Activated T-helper 2 cell treated with anti-CD3 and anti-CD28 coated beads, Interferon-gamma antibody, Interleukin-2, Interleukin-4, amounts not matched to agents 10 μg/mL and 5 μg/mL and 100 μg/mL, durations not matched to agents 14 hours and 24 hours and 36 hours (primary cell): ENCODE measurements at regions of chr5 and their contacts with region 1.

Region 1: DNA sequence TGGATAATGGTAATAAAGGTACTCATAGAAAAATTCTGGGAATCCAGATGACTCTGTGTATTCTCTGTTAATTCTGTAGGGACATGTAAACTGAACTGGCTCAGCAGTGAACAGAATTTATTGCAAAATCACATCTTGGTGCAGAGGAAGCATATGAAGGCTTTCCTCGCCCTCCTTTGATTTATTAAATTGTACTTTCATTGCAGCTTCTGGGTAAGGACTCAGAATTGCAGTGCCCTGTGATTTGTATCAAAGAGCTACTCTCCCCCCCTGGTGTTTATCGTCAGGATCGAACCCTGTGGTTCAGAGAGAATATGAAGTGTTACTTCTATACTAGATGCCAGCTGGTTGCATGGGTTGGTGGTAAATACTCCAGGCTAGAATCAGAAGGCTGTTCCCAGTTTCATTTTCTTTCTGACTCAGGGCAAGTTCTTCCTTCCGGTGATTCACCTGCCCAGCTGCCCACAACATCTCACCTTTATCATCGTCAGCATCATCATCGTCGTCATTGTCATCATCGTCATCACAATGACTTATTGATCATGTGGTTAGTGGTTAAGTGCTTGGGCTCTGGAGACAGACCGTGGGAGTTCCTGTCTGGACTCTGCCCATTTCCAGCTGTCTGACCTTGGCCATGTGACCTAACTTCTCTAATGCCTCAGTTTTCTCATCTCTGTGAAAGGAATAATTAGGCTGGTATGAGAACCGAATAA is 238.8 kb downstream of the ARHGAP26 start:
- DNase-seq: peak; percentile 82
- H3K4me3 Mint-ChIP-seq: peak overlapping the region; percentile 9
- H3K27ac Mint-ChIP-seq: peak overlapping the region; percentile 80
- H3K4me1 Mint-ChIP-seq: peaks cover 76% of the 10 kb centered on the region
- H3K27me3 Mint-ChIP-seq: no peaks in the 10 kb centered on the region

Region 2: DNA sequence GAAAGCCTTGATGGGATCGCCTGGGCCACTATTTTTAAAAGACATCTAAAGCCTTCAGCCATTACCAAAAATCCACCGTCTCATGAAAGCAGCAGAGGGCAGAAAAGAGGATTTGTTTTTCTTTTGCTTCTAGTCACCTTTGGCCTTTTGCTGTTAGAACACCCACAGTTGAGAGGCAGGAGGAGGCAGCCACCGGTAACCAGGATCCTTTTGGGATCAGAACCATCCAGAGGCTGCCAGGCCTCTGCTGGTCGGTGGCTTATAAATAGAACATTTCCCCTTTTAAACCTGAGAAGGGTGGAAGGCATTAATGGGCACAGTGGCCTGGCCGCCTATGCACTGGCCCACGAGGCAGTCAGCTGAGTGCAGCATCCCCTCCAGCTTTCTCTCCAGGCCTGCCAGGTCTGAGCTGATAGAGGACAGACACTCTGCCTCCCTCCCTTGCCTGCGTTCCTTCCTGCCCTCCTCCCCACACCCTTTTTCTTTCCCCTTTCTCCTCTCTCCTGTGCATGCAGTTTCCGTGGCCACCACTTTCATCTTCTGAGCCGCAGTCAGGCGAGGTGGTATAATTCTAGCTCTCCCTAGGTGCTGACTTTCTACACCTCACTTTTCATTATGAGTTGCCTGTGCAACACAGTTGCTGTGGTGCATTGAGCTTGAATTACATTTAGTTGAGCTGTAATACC is 14.6 kb after region 1 on chr5:
- intact Hi-C with region 1: loop called (anchors 2 kb)
- DNase-seq: peak; percentile 41
- H3K4me3 Mint-ChIP-seq: no peak overlapping the region
- H3K27ac Mint-ChIP-seq: peak overlapping the region; percentile 45
- H3K4me1 Mint-ChIP-seq: peaks cover 55% of the 10 kb centered on the region
- H3K27me3 Mint-ChIP-seq: no peaks in the 10 kb centered on the region

Region 3: GRCh38 chr5:143066556-143067281 is 57.8 kb after region 1 on chr5:
- intact Hi-C with region 1: loop called (anchors 2 kb)
- DNase-seq: no peak
- H3K4me3 Mint-ChIP-seq: no peak overlapping the region
- H3K27ac Mint-ChIP-seq: peak overlapping the region; percentile 90
- H3K4me1 Mint-ChIP-seq: peaks cover 51% of the 10 kb centered on the region
- H3K27me3 Mint-ChIP-seq: no peaks in the 10 kb centered on the region

Region 4: GRCh38 chr5:143182901-143183820 is 174.2 kb after region 1 on chr5:
- intact Hi-C with region 1: loop called (anchors 1 kb)
- DNase-seq: peak; percentile 33
- H3K4me3 Mint-ChIP-seq: peak overlapping the region; percentile 43
- H3K27ac Mint-ChIP-seq: peak overlapping the region; percentile 82
- H3K4me1 Mint-ChIP-seq: peaks cover 61% of the 10 kb centered on the region
- H3K27me3 Mint-ChIP-seq: no peaks in the 10 kb centered on the region

Region 5: DNA sequence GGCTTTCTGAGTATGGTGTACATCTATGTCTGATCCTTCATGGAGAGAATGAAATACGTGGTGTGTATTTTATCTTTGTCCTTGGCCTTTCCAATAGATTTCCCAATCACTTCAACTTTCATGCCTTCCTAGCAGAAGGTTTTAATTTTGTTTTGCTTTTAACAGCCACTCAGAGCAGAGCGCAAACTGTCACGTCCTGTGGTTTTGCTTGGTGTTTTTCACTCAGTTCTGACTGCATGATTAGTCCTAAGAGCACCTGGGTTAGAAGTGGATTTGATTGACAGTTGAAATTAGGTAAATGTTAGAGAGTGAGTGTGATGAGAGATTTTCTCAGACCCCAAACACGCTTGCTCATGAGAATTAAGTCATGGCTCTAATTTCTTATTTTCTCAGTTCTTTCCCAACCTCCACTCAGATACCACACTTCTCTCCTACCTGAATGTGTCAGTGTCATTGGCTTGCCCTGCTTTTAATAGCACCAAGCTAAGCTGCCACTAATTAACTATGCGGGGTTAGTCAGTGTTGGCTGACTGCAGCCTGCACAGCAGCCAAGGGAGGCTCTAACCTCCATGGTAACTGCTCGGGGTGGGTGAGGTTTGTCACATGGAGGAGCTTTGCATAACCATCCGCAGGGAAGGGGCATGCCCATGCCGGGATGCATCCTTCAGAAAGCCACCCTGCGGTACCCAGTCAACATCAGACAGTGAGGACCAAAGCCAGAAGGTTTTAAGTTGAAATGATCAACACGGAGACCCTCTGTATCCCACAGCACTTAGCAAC is 221.1 kb after region 1 on chr5:
- intact Hi-C with region 1: no loop called
- DNase-seq: peak; percentile 43
- H3K4me3 Mint-ChIP-seq: peak overlapping the region; percentile 27
- H3K27ac Mint-ChIP-seq: peak overlapping the region; percentile 79
- H3K4me1 Mint-ChIP-seq: peaks cover 51% of the 10 kb centered on the region
- H3K27me3 Mint-ChIP-seq: no peaks in the 10 kb centered on the region

Region 6: DNA sequence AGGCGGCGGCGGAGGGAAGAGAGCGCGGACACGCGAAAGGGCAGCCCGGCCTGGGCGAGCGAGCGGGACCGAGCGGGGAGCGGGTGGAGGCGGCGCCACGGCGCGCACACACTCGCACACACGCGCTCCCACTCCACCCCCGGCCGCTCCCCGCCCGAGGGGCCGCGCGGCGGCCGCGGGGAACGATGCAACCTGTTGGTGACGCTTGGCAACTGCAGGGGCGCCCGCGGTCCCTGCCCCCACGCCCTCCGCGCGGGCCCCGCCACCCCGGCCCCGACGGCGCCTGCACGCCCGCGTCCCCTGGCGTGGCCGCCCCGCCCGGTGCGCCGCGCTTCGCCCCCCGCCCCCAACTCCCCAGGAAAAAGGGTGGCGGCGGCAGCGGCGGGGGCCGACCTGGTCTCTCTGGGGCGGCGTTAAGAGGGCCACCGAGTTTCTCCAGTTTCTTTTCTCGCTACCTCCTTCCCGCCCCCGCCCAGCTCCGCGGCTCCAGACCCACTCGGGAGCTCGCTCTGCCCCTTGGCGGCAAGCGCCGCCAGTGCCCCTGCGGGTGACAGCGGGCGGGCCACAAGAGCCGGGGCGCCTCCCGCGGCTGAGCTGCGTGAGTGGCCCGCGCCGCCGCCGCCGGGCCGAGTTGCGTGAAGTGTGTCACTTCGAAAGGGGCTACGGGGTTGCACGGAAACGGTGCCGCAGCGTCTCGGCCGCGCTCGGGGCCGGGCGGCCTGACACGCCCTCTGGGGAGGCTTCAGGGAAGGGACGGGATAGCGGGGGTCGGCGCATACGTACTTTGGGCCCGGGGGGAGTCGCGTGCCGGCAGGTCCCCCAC is 394.8 kb after region 1 on chr5 and contains the start of gene NR3C1:
- intact Hi-C with region 1: loop called (anchors 2 kb)
- DNase-seq: peak; percentile 81
- H3K4me3 Mint-ChIP-seq: peak within 1 kb of the TSS; percentile 88
- H3K27ac Mint-ChIP-seq: peak within 1 kb of the TSS; percentile 97
- H3K4me1 Mint-ChIP-seq: peaks cover 45% of the 10 kb centered on the region
- H3K27me3 Mint-ChIP-seq: no peaks in the 10 kb centered on the region
- total RNA-seq, gene NR3C1: 51.3 and 52.0 TPM in 2 replicates

Region 7: DNA sequence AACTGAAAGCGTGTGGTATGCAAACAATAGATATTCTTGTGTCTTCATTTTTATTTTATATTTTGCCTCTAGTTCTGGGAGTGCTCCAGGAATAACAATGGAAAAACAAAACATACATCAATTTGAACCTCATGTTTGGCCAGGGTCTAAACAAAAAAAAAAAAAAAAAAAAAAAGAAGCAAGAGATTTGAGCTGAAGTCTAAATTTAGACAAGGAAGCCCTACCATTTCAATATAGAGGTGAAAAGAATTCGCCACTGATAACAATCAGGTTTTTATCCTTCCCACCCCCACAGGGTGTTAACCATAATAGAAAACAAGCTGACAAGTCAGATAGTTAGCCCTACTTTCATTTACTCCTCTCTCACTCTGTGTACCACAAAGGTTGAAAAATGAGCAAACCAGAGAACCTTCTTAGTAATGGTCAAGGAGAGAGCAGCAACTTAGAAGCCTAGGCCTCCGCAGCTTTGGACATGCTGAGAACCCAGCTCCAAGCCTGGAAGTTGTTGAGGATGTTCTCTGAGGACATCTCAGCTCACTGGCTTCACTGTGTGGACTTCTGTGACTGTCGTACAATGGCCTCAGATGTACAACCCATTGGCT is 684.8 kb after region 1 on chr5:
- intact Hi-C with region 1: loop called (anchors 5 kb)
- DNase-seq: peak; percentile 11
- H3K4me3 Mint-ChIP-seq: no peak overlapping the region
- H3K27ac Mint-ChIP-seq: peak overlapping the region; percentile 68
- H3K4me1 Mint-ChIP-seq: peaks cover 57% of the 10 kb centered on the region
- H3K27me3 Mint-ChIP-seq: no peaks in the 10 kb centered on the region

Region 8: DNA sequence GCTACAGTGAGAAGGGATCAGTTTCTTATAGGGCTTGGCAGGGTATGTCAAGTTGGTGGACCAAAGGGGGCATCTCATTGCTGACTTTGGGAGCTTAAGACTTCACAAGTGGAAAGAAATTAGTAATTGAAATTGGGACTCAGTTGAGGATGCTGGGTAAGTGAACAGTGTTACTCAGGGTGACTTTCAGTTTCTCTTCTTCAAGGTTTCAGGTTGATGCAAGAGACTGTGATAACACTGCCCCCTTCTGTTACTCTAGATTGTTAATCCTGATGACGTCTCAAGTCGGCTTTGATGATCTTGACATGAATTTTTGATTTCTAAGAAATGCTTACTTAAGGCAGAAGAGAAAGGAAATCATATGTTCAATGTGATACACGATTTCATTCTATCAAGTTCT is 1183.0 kb after region 1 on chr5:
- intact Hi-C with region 1: loop called (anchors 1 kb)
- DNase-seq: peak; percentile 40
- H3K4me3 Mint-ChIP-seq: no peak overlapping the region
- H3K27ac Mint-ChIP-seq: no peak overlapping the region
- H3K4me1 Mint-ChIP-seq: peaks cover 27% of the 10 kb centered on the region
- H3K27me3 Mint-ChIP-seq: peaks cover 7% of the 10 kb centered on the region